Cardiac septum (tissue), 1 donor: ENCODE measurements at regions of chr10 and their contacts with region 1.

Region 1: DNA sequence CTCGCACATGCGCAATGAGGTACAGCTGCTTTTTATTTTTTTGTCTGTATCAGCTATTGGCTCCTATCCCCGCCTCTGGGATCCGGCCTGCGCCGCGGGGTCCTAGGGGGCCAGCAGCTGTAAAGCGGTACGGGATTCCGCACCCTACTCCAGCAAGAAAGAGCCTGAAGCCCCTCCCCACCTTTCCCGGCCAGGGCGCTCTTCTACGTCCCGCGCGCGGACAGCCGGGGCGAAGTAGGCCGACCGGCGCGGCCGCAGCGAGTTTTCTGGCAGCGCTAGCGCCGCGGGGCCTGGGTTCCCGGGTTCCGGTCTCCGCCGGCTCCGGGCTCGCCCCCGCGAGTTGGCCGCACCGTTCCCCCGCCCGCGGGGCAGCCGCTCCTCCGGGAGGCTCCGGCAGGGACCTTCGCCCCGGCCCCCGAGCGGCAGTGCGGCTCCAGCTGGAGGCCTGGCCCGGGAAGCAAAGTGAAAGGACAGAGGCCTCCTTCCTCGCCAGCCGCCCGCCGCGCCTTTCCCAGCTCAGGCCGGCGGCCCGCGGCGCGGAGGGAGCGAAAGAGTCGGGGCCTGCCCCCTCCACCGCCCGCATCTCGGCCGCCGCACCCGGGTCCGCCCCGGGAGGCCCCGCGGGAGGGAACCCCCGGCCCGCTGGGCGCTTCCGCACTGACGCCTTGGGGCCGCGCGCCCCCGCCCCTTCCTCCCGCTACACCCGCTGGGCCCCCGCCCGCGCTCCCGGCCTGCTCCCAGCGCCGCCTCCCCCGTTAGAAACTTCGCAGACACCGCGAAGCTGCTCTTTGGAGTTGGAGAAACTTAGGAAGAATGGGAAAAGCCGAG is 4.7 kb upstream of the SPAG6 start:
- DNase-seq: peak; percentile 87

Region 2: GRCh38 chr10:22174442-22174841 is 166.1 kb before region 1 on chr10:
- intact Hi-C with region 1: no loop called
- DNase-seq: no peak

Region 3: DNA sequence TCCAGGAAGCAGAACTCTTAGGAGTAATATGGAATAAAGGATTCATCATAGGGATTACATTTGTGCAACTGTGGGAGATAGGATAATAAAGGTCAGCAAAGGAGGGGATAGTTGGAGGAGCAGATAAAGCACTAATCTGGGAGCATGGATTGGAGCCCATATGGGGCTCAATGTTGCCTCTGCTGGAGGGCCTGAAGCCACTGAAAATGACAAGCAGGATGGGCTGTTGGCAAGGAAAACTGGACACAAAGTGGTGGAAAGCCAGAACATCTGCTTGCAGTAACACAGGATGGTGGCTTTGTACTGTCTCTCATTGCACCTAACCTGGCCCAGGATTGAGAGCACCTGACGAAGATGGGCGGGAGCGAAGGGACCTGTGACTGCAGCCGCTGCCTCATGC is 39.4 kb before region 1 on chr10:
- intact Hi-C with region 1: no loop called
- DNase-seq: no peak

Region 4: GRCh38 chr10:22325272-22326144 is 15.1 kb before region 1 on chr10:
- intact Hi-C with region 1: loop called (anchors 2 kb)
- DNase-seq: peak; percentile 85

Region 5: DNA sequence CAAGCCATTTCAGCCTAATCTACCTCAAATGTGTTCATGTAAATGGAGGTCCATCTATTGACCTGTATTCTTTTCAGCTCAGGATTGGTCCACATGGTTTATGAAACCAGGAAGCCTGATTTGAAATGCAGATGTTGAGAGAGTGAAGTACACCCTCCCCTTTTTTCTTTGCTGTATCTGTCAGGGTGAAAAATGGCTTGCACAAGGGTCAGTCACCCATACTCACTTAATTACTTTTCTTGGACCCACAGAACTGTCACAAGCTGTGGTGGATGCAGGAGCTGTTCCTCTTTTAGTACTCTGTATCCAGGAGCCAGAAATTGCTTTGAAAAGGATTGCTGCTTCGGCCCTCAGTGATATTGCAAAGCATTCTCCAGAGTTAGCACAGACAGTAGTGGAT is 45.9 kb after region 1 on chr10:
- intact Hi-C with region 1: no loop called
- DNase-seq: no peak

Region 6: DNA sequence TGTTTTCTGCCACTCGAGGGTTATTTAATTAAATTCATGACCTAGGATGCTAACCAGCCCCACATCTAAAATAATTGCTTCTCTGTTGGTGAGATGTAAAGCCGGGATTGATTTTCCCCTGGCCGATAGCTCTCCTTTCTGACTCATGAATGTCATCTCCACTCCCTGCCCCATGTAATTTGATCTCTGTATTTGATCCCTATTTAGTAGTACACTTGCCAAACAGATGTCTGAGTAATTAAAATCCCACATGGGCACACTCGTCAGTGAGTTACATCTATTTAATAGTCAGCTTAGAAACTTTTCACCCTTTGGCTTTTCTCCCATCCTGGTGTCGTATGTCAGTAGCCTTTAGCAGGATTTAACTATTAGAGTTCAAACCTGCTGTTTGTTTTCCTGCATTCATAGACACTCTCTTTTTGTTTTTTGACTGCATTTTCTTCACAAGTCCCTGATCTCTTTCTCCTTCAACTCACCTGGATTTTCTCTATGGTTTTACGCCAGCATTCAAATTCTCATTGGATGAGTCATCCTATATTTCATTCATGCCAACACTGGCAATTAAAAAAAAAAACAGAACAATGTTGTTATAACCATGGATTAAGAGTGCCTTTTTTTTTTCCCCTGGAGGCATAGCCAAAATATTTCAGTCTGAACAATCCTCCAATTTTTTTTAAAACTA is 87.5 kb after region 1 on chr10:
- intact Hi-C with region 1: loop called (anchors 5 kb)
- DNase-seq: no peak